Activated CD4-positive, alpha-beta T cell treated with anti-CD3 and anti-CD28 coated beads for 36 hours (primary cell): ENCODE measurements at regions of chr18 and their contacts with region 1.

Region 1: GRCh38 chr18:31942999-31943865 is at the start of gene TRAPPC8:
- DNase-seq: peak; percentile 95
- ATAC-seq: peak; percentile 85
- H3K4me3 Mint-ChIP-seq: peak within 1 kb of the TSS; percentile 99
- H3K27ac Mint-ChIP-seq: peak within 1 kb of the TSS; percentile 100
- H3K4me1 Mint-ChIP-seq: peaks cover 37% of the 10 kb centered on the region
- H3K27me3 Mint-ChIP-seq: no peaks in the 10 kb centered on the region
- total RNA-seq, gene TRAPPC8: 23.3 to 24.2 TPM

Region 2: GRCh38 chr18:31658670-31659575 is 284.3 kb before region 1 on chr18:
- CTCF ChIA-PET with region 1: interaction called, 3 read pairs
- POLR2A ChIA-PET with region 1: interaction called, 7 read pairs
- intact Hi-C with region 1: loop called in 1 of 2 experiments (anchors 2 kb)
- DNase-seq: peak; percentile 34
- ATAC-seq: peak; percentile 90
- H3K4me3 Mint-ChIP-seq: no peak overlapping the region
- H3K27ac Mint-ChIP-seq: peak overlapping the region; percentile 73
- H3K4me1 Mint-ChIP-seq: peaks cover 22% of the 10 kb centered on the region
- H3K27me3 Mint-ChIP-seq: peaks cover 2% of the 10 kb centered on the region

Region 3: GRCh38 chr18:31685097-31686082 is 257.8 kb before region 1 on chr18:
- CTCF ChIA-PET with region 1: no interaction called
- POLR2A ChIA-PET with region 1: no interaction called
- intact Hi-C with region 1: loop called in 1 of 2 experiments (anchors 1 kb)
- DNase-seq: peak; percentile 74
- ATAC-seq: peak; percentile 80
- H3K4me3 Mint-ChIP-seq: peak overlapping the region; percentile 73
- H3K27ac Mint-ChIP-seq: peak overlapping the region; percentile 78
- H3K4me1 Mint-ChIP-seq: peaks cover 16% of the 10 kb centered on the region
- H3K27me3 Mint-ChIP-seq: peaks cover 39% of the 10 kb centered on the region

Region 4: GRCh38 chr18:31977270-31977872 is 34.1 kb after region 1 on chr18:
- CTCF ChIA-PET with region 1: interaction called, 10 read pairs
- POLR2A ChIA-PET with region 1: no interaction called
- intact Hi-C with region 1: no loop called
- DNase-seq: peak; percentile 39
- ATAC-seq: no peak
- H3K4me3 Mint-ChIP-seq: no peak overlapping the region
- H3K27ac Mint-ChIP-seq: no peak overlapping the region
- H3K4me1 Mint-ChIP-seq: no peaks in the 10 kb centered on the region
- H3K27me3 Mint-ChIP-seq: no peaks in the 10 kb centered on the region

Region 5: DNA sequence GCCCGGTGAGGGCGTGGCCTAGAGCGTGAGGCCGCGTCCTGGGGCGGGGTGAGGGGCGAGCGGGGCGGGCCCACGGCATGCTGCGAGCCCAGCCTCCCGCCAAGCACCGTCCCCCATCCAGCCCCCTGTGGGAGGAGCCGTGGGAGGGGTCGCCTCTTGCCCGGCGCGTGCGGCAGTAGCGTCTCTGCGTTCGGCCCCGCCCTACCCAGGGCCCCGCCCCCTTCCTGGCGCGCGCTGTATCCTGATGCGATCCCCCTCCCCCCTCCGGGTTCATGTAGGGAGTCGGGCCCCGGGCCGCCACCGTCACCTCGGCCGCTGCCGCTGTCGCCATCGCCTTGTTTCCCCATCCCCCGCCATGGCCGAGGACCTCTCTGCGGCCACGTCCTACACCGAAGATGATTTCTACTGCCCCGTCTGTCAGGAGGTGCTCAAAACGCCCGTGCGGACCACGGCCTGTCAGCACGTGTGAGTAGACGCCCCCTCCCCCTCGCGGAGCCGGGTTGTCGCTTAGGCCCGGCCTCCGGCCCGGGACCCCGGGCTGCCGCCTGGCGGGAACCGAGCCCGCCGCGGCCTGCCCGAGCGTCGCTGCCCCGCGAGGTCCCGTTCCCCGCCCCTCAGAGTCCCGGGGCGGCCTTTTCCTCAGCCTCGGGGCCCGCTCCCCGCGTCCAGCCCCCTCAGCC is 149.3 kb after region 1 on chr18:
- CTCF ChIA-PET with region 1: interaction called, 3 read pairs
- POLR2A ChIA-PET with region 1: interaction called, 6 read pairs
- intact Hi-C with region 1: loop called (anchors 1 kb)
- DNase-seq: peak; percentile 100
- ATAC-seq: peak; percentile 89
- H3K4me3 Mint-ChIP-seq: peak overlapping the region; percentile 93
- H3K27ac Mint-ChIP-seq: peak overlapping the region; percentile 97
- H3K4me1 Mint-ChIP-seq: peaks cover 41% of the 10 kb centered on the region
- H3K27me3 Mint-ChIP-seq: no peaks in the 10 kb centered on the region

Region 6: DNA sequence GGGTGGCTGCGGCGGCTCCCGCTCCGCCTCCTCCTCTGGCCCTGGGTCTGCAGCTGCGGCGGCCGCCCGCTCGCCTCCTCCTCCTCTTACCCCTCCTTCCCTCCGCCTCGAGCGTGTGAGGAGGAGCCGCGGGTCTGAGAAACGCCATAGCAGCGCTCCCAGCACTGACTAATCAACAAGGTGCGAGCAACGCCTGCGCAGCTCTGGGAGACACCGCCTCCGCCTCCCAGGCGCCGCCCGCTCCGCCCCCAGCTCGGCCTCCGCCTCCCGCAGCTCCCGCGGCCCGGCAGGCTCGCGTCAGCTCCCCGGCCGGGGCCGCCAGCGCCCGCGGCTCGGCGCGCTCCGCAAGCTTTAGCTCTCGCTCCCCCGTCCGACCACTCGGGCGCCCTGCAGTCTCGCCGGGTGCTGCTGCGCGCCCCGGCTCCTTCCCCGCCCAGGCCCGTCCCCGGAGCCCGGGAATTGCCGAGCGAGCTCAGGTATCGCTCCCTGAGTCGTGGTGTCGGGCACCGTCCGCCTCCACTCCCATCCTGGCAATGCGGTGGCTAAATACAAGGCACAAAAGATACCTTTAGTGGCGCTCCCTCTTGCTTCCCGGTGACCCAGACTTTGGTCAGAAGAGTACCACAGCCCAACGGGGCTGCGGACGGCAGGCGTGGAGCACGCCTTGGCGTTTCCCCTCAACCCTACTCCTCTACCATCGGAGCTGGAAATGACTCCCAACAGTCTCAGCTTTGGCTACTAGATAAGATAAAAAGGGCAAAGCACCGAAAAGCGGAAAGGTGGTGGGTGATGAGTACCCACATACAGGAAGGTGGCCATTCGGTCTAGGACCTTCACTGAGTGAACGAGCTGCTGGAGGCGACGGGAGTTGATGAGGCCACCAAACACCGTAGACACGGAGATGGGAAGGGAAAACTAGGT is 527.7 kb after region 1 on chr18 and contains the start of gene GAREM1:
- CTCF ChIA-PET with region 1: no interaction called
- POLR2A ChIA-PET with region 1: no interaction called
- intact Hi-C with region 1: loop called in 1 of 2 experiments (anchors 10 kb)
- DNase-seq: peak; percentile 86
- ATAC-seq: peak; percentile 92
- H3K4me3 Mint-ChIP-seq: peak within 1 kb of the TSS; percentile 61
- H3K27ac Mint-ChIP-seq: no peak within 1 kb of the TSS
- H3K4me1 Mint-ChIP-seq: peaks cover 24% of the 10 kb centered on the region
- H3K27me3 Mint-ChIP-seq: peaks cover 37% of the 10 kb centered on the region
- total RNA-seq, gene GAREM1: not detected

Region 7: DNA sequence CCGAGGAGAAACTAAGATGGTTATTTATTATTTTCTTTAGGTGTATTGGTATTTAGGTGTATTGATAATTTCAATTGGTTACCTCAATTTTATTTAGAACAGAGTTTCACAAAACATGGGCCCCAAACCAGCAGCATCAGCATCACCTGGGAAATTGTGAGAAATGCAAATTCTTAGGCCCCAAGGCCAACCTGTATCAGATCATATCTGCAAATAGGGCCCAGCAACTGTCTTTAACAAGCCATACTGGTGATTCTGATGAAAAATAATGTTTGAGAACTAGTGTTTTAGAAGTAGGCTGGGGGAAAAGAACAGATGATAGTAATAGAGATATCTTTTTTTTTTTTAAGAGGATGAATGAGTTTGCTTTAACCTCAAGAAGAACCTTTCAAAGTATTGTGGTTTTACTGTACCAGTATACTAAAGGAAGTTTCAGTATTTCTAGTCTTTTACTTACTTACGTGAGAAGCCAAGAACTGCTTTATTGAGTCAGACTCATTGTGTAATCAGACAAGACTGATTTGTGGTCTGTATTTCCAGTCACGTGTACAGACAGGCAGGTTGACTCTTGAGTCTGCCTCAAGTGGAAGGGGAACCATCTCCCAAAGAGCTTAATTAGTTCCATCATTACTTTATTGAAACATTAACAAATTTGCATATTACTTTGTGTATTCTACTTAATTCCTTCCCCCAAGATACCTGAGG is 587.9 kb after region 1 on chr18:
- CTCF ChIA-PET with region 1: no interaction called
- POLR2A ChIA-PET with region 1: no interaction called
- intact Hi-C with region 1: loop called in 1 of 2 experiments (anchors 2 kb)
- DNase-seq: peak; percentile 43
- ATAC-seq: peak; percentile 96
- H3K4me3 Mint-ChIP-seq: no peak overlapping the region
- H3K27ac Mint-ChIP-seq: peak overlapping the region; percentile 14
- H3K4me1 Mint-ChIP-seq: peaks cover 17% of the 10 kb centered on the region
- H3K27me3 Mint-ChIP-seq: peaks cover 15% of the 10 kb centered on the region